ENCODE measurements at regions of chr10 and their contacts with region 1.

Region 1: DNA sequence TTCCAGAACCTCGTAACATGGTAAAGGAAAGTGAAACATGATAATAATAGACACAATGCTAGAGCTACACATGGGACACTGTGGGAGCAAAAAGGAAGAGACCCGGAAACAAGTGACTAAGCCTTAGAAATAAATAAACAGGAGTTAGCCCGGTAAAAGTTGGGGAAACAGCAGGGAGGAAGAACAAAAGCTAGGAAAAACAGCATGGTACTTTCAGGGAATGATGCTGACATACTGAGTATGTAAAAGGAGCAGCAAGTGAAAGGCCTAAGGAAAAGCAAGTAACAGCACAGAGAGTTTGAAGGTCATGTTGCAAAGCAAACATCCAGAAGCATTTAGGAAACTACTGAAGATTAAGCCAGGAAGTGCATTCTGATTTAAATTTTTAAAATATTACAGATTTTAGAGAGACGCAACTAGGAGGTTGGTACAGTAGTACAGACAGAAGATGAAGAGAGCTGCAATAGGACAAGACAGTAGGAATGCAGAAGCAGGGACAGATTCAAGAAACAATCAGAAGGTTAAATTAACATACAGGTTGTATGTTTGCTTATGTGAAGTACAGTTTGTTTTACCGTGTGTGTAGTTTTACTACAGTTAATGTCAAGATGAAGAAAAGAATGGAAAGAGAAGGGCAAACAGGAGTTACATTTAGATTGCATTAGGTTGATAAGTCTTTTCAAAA is 63.7 kb downstream of the ARHGAP12 start:
- DNase-seq: no peak
- H3K4me3 ChIP-seq: peak overlapping the region; percentile 39
- H3K27ac ChIP-seq: peak overlapping the region; percentile 59
- H3K4me1 ChIP-seq: peaks cover 36% of the 10 kb centered on the region
- H3K27me3 ChIP-seq: no peaks in the 10 kb centered on the region
- CTCF ChIP-seq: no peak

Region 2: GRCh38 chr10:31536302-31536701 is 328.7 kb before region 1 on chr10:
- intact Hi-C with region 1: no loop called
- DNase-seq: no peak
- H3K4me3 ChIP-seq: no peak overlapping the region
- H3K27ac ChIP-seq: no peak overlapping the region
- H3K4me1 ChIP-seq: peaks cover 6% of the 10 kb centered on the region
- H3K27me3 ChIP-seq: no peaks in the 10 kb centered on the region
- CTCF ChIP-seq: no peak

Region 3: GRCh38 chr10:31749981-31750731 is 114.8 kb before region 1 on chr10:
- intact Hi-C with region 1: no loop called
- DNase-seq: peak; percentile 58
- H3K4me3 ChIP-seq: no peak overlapping the region
- H3K27ac ChIP-seq: peak overlapping the region; percentile 55
- H3K4me1 ChIP-seq: peaks cover 49% of the 10 kb centered on the region
- H3K27me3 ChIP-seq: no peaks in the 10 kb centered on the region
- CTCF ChIP-seq: no peak

Region 4: DNA sequence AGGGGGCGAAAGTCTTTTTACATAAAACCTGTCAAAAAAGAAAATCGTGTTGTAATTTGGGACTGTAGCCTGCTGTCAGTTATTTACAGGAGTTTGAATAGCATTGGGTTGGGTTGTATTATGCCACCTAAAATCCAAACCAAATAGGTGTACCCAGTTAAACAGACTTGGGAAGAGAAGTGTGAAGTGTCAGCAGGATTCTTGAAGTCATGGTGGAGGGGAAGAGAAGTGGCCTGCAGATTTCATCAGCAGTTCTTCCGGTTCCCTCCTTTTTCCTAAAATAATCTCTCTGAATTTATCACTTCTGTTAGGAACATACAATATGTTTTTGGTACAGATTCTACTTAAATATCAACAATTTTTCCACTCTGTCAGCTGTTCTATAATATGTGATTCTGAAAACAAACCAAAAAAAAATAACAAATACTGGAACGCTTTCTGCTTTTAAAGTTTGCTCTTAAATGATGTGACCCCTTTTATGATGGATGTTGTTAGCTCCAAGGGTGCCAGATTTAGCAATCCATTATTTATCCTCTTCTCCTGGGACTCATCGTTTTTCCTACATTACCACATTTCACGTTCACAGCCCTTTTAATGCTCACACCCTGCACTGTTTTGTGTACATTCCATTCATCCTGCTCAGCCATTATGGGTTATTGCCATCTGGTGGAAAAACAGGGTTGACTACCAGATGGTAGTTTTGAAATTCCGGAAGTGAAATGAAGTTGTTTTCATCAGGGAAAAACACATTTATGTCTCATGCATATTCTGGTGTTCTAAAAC is 82.4 kb after region 1 on chr10:
- intact Hi-C with region 1: loop called (anchors 10 kb)
- DNase-seq: no peak
- H3K4me3 ChIP-seq: no peak overlapping the region
- H3K27ac ChIP-seq: peak overlapping the region; percentile 48
- H3K4me1 ChIP-seq: no peaks in the 10 kb centered on the region
- H3K27me3 ChIP-seq: no peaks in the 10 kb centered on the region
- CTCF ChIP-seq: peak; percentile 59

Region 5: GRCh38 chr10:32005050-32005449 is 140.1 kb after region 1 on chr10:
- intact Hi-C with region 1: loop called (anchors 5 kb)
- DNase-seq: no peak
- H3K4me3 ChIP-seq: no peak overlapping the region
- H3K27ac ChIP-seq: no peak overlapping the region
- H3K4me1 ChIP-seq: peaks cover 22% of the 10 kb centered on the region
- H3K27me3 ChIP-seq: no peaks in the 10 kb centered on the region
- CTCF ChIP-seq: peak; percentile 61

Region 6: GRCh38 chr10:32084185-32084851 is 219.3 kb after region 1 on chr10:
- intact Hi-C with region 1: no loop called
- DNase-seq: no peak
- H3K4me3 ChIP-seq: no peak overlapping the region
- H3K27ac ChIP-seq: no peak overlapping the region
- H3K4me1 ChIP-seq: no peaks in the 10 kb centered on the region
- H3K27me3 ChIP-seq: no peaks in the 10 kb centered on the region
- CTCF ChIP-seq: no peak

Measured in left ventricle myocardium inferior (tissue), 1 donor.